ENCODE measurements at regions of chr15 and their contacts with region 1.

Region 1: GRCh38 chr15:99928429-99928981 is 195.3 kb upstream of the LYSMD4 start:
- DNase-seq: peak; percentile 79 to 90 (median 88)
- H3K4me3 ChIP-seq: peak overlapping the region; percentile 74 to 78
- H3K4me3 Mint-ChIP-seq: peak overlapping the region; percentile 88 to 94 (median 90)
- H3K27ac ChIP-seq: peak overlapping the region; percentile 62
- H3K27ac Mint-ChIP-seq: peak overlapping the region; percentile 88 to 97 (median 93)
- H3K4me1 ChIP-seq: peaks cover 18% of the 10 kb centered on the region
- H3K4me1 Mint-ChIP-seq: peaks cover 9 to 27% (median 17%) of the 10 kb centered on the region in 4 donors
- H3K27me3 ChIP-seq: no peaks in the 10 kb centered on the region
- H3K27me3 Mint-ChIP-seq: peaks cover 2 to 4% of the 10 kb centered on the region in 2 donors

Region 2: GRCh38 chr15:99733268-99734039 is 195.1 kb before region 1 on chr15 and contains the start of gene LYSMD4:
- CTCF ChIA-PET with region 1: no interaction called
- POLR2A ChIA-PET with region 1: interaction called, 5 read pairs
- intact Hi-C with region 1: loop called (anchors 10 kb)
- DNase-seq: peak; percentile 95 to 97 (median 96)
- H3K4me3 ChIP-seq: peak within 1 kb of the TSS; percentile 6 to 67
- H3K4me3 Mint-ChIP-seq: peak within 1 kb of the TSS; percentile 83 to 95 (median 87)
- H3K27ac ChIP-seq: peak within 1 kb of the TSS; percentile 46
- H3K27ac Mint-ChIP-seq: peak within 1 kb of the TSS; percentile 80 to 97 (median 88)
- H3K4me1 ChIP-seq: peaks cover 14% of the 10 kb centered on the region
- H3K4me1 Mint-ChIP-seq: peaks cover 12 to 24% (median 16%) of the 10 kb centered on the region in 4 donors
- H3K27me3 ChIP-seq: no peaks in the 10 kb centered on the region
- H3K27me3 Mint-ChIP-seq: no peaks in the 10 kb centered on the region
- total RNA-seq, gene LYSMD4: 18.0 to 19.0 TPM

Region 3: GRCh38 chr15:100330629-100331215 is 402.2 kb after region 1 on chr15:
- CTCF ChIA-PET with region 1: interaction called, 11 read pairs
- POLR2A ChIA-PET with region 1: interaction called, 5 read pairs
- intact Hi-C with region 1: no loop called
- DNase-seq: peak; percentile 56 to 77 (median 69)
- H3K4me3 ChIP-seq: peak overlapping the region in 1 of 2 donors; percentile 27
- H3K4me3 Mint-ChIP-seq: peak overlapping the region; percentile 64 to 86 (median 72)
- H3K27ac ChIP-seq: peak overlapping the region; percentile 27
- H3K27ac Mint-ChIP-seq: peak overlapping the region; percentile 13 to 76 (median 64)
- H3K4me1 ChIP-seq: peaks cover 62% of the 10 kb centered on the region
- H3K4me1 Mint-ChIP-seq: peaks cover 40 to 80% (median 60%) of the 10 kb centered on the region in 4 donors
- H3K27me3 ChIP-seq: no peaks in the 10 kb centered on the region
- H3K27me3 Mint-ChIP-seq: no peaks in the 10 kb centered on the region

Region 4: DNA sequence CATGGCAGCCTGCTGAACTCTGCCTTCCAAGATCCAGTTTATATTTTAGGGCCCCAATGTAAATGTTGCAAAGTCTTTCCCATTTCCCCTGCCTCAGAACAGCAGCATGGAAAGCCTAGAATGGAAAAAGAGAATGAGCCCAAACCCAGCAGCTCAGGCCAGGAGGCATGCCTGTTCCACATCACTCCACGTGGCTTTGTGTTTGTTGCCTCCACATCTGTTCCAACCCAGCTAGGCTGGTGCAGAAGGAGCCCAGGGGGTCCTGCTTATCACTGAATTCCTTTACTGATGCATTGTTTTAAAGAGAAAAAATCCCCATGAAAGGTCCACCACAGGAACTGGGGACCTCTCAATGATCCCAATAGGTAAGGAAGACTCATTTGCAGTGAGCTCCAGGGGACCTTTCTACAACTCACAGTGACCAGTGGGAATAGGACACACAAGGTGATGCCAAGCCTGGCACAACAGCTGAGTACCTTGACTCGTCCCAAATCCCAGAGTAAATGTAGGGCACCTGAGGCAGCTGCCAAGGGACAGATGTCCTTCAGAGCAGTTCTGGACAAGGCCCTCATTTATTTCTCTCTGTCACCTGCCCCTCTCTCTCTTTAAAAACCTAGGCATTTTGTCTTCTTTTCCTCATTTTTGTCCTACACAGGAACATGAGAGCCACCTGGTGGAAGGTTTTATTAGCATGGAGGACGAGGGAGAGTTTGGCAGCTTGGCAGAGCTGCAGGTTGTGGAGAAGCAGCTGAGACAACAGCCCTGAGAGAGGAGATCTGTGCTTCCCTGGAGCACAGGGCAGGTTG is 455.0 kb after region 1 on chr15:
- CTCF ChIA-PET with region 1: interaction called, 4 read pairs
- POLR2A ChIA-PET with region 1: no interaction called
- intact Hi-C with region 1: loop called (anchors 2 kb)
- DNase-seq: peak in 4 of 5 donors; percentile 26 to 39 (median 31)
- H3K4me3 ChIP-seq: no peak overlapping the region
- H3K4me3 Mint-ChIP-seq: no peak overlapping the region
- H3K27ac ChIP-seq: no peak overlapping the region
- H3K27ac Mint-ChIP-seq: peak overlapping the region in 1 of 7 donors; percentile 61
- H3K4me1 ChIP-seq: no peaks in the 10 kb centered on the region
- H3K4me1 Mint-ChIP-seq: peaks cover 0 to 2% (median 0%) of the 10 kb centered on the region in 4 donors
- H3K27me3 ChIP-seq: no peaks in the 10 kb centered on the region
- H3K27me3 Mint-ChIP-seq: peaks cover 1 to 11% of the 10 kb centered on the region in 2 donors

Region 5: DNA sequence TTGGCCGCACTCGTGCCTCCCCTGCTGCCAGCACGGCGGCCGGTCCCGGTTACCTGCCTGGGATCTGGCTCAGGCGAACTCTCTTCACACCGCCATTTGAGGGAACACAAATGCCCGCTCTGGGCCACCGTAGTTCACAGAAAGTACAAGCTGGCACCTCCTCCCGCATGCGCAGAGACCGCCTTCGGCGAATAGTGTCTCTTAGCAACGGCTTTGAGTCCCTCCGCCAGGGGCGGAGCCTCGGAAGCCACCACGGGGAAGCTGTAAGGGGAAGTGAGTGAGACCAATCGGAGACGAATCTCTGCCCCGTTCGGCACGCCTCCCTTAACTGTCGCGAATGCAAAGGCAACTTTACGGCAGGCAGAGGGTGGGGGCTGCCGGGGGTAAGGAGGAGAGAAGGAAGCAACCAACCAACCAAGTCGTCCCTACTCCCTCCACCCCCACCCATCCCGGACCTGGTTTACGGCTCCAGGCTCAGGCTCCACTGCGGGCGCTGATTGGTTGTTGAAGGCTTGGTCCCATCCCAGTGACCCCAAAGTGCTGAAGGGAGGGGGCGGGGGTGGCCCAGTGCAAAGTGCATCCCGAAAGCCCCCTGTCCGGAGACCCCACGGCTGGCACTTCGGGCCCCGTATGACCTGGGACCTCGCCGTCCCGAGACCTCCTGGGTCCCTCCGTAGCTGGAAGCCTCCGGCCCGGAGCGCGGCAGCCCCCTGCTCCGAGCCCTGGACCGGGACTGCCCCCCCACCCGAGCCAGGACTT is 673.7 kb after region 1 on chr15 and contains the starts of genes ASB7 and LINS1:
- CTCF ChIA-PET with region 1: no interaction called
- POLR2A ChIA-PET with region 1: interaction called, 13 read pairs
- intact Hi-C with region 1: loop called (anchors 2 kb)
- DNase-seq: peak; percentile 99 to 100 (median 100)
- H3K4me3 ChIP-seq: peak within 1 kb of the TSS; percentile 85 to 97
- H3K4me3 Mint-ChIP-seq: no peak within 1 kb of the TSS
- H3K27ac ChIP-seq: peak within 1 kb of the TSS; percentile 95
- H3K27ac Mint-ChIP-seq: peak within 1 kb of the TSS in 6 of 7 donors; percentile 89 to 98 (median 94)
- H3K4me1 ChIP-seq: peaks cover 58% of the 10 kb centered on the region
- H3K4me1 Mint-ChIP-seq: peaks cover 36 to 56% (median 51%) of the 10 kb centered on the region in 4 donors
- H3K27me3 ChIP-seq: no peaks in the 10 kb centered on the region
- H3K27me3 Mint-ChIP-seq: no peaks in the 10 kb centered on the region
- total RNA-seq, gene ASB7: 19.5 to 20.0 TPM
- total RNA-seq, gene LINS1: 76.4 to 84.0 TPM